BJ (cell line): ENCODE measurements at regions of chr10 and their contacts with region 1.

Region 1: DNA sequence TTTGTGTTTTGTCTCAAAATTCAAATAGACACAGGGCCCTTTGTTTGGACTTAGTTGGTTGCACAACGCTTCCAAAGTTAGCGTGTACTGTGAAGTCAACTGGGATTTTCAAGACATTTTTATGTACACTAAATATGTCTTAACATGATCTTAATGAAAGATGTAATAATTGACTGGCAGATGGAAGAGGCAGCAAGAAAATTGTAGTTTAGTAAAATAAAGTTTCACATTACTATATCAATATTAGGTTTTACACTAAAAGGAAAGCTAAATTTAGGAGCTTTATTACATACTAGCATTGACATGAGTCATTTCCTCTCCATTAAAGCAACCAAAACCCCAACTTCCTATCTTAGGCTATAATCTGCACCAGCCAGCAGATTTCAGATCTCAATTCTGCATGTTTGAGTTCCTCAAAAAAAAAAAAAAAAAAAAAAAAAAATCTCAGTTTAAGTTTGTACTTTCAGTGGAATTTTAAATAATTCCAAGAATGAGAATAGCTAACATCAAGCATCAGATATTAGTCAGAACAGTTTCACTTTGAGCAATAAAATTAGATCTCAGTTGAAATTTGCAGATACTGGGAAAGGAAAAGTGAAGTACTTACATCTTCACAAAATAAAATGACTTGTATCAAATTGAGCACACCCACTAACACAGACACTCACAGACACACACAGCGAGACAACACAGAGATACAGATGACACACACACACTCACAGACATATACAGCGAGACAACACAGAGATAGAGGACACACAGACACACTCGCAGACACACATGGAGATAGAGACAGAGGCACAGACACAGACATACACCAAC is 346.6 kb upstream of the KLF6 start:
- DNase-seq: peak; percentile 93
- H3K4me3 ChIP-seq: no peak overlapping the region
- H3K27me3 ChIP-seq: no peaks in the 10 kb centered on the region
- CTCF ChIP-seq: no peak

Region 2: DNA sequence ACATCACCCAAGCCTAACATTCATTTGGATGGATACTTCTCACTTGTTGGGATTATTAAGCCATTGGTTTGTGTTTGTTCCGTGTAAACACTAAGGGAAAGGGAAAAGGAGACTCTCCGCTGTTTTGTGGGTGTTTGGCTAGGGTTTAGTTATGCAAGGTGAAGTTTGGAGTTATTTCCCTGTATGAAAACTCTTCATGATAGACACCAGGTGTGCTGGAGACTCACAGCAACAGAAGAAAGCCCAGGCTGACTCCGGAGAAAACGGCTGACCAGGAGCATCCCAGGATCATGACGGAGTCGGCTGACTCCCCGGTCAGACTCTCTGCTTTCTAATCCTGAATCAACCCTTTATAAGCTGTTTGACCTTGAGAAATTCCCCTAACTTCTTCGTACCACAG is 252.5 kb before region 1 on chr10:
- CTCF ChIA-PET with region 1: no interaction called
- POLR2A ChIA-PET with region 1: interaction called, 14 read pairs
- DNase-seq: no peak
- H3K4me3 ChIP-seq: no peak overlapping the region
- H3K27me3 ChIP-seq: no peaks in the 10 kb centered on the region
- CTCF ChIP-seq: no peak

Region 3: GRCh38 chr10:4344511-4344994 is 212.9 kb after region 1 on chr10:
- CTCF ChIA-PET with region 1: no interaction called
- POLR2A ChIA-PET with region 1: interaction called, 15 read pairs
- DNase-seq: peak; percentile 100
- H3K4me3 ChIP-seq: no peak overlapping the region
- H3K27me3 ChIP-seq: no peaks in the 10 kb centered on the region
- CTCF ChIP-seq: peak; percentile 33; the same call in 1 of the 2 replicates

Region 4: GRCh38 chr10:4626919-4627318 is 495.3 kb after region 1 on chr10:
- CTCF ChIA-PET with region 1: no interaction called
- POLR2A ChIA-PET with region 1: interaction called, 13 read pairs
- DNase-seq: no peak
- H3K4me3 ChIP-seq: no peak overlapping the region
- H3K27me3 ChIP-seq: no peaks in the 10 kb centered on the region
- CTCF ChIP-seq: no peak